GM13977 (cell line): ENCODE measurements at regions of chr19 and their contacts with region 1.

Region 1: GRCh38 chr19:16764793-16765433 is 45.3 kb downstream of the NWD1 start:
- DNase-seq: no peak
- CTCF ChIP-seq: no peak

Region 2: GRCh38 chr19:17005000-17005399 is 240.1 kb after region 1 on chr19:
- in situ Hi-C with region 1: no loop called
- DNase-seq: no peak
- CTCF ChIP-seq: peak; percentile 8

Region 3: DNA sequence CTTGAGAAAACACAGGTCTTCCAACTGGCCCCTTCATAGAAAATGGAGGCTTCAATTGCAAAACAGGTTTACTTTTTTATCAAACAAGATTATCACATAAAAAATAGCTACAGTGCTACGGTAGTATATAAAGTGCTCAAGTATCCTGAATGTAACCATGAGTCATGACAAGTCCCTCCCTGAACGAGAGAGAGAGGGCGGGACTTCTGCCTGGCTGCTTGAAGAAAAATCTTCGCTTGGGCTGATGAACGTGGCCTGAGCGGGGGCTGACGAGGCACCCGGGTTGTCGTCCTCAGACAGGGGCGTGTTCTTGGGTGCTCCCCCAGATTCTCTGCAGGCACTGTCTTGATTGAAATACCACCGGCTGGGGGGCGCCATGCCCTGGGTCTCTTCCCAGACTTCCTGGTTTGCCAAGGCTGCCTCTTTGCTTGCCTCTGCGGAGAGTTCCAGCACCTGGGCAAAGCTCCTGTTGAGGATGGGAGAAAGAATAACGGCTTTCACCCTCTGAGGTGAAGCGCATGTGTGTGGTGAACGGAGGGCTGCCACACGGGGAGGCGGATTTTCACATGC is 284.9 kb after region 1 on chr19:
- in situ Hi-C with region 1: loop called (anchors 10 kb)
- DNase-seq: no peak
- CTCF ChIP-seq: no peak